ENCODE measurements at regions of chr11 and their contacts with region 1.

Region 1: DNA sequence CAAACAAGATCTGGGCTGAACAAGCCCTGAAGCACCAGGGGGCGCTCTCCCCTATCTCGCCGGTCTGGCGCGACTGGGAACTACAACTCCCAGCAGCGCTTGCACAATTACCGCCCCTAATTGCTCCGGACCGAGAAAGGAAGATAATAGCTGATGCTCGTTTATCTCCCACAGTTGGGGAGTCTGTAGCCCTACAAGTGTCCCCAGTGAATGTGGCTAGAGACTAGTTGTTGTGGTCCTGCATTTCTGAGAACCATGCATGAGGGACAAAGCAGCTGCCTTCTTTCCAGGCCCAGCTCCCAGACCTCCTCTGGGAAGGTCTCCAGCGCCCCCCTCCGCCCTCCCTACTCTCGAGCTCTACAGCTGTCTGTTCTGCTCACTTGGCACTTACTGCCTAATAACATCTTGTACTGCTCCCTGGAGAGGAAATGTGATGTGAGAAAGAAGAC is 34.4 kb downstream of the NRXN2 start:
- DNase-seq: peak; percentile 94
- H3K4me3 Mint-ChIP-seq: peak overlapping the region; percentile 35
- H3K27ac Mint-ChIP-seq: no peak overlapping the region
- H3K4me1 Mint-ChIP-seq: peaks cover 18% of the 10 kb centered on the region
- H3K27me3 Mint-ChIP-seq: peaks cover 59% of the 10 kb centered on the region

Region 2: DNA sequence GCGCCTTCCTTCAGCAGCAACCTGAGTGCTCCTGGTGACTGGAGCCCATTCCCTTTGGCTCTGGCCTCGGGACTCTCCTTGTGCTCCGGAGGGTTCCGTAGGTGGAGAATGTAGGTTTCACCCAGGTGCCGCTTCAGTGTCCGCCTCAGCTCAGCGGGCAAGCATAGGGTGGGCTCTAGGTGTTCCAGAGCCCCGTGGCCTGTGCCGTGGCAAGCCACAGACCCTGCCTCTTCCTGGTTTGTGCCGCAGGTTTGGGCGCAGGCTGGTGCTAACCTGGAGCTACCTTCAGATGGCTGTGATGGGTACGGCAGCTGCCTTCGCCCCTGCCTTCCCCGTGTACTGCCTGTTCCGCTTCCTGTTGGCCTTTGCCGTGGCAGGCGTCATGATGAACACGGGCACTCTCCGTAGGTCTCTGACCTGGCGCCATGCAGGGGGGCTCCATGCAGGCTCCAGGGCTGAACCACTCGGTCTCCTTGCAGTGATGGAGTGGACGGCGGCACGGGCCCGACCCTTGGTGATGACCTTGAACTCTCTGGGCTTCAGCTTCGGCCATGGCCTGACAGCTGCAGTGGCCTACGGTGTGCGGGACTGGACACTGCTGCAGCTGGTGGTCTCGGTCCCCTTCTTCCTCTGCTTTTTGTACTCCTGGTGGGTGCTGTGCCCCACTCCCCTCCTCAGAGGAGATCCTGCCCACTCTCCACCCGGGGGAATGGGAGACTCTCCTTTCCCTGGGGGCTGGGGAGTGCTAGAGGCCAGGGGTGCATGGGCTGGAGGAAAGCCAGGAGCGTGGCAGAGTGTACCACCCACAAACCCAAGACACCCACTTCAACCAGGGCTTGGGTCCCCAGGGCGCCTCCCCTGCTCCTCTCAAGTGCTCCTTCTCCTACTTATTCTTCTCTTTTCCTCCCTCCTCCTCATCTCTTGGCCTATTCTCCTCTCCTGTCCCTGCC is 95.1 kb before region 1 on chr11:
- CTCF ChIA-PET with region 1: no interaction called
- DNase-seq: no peak
- H3K4me3 Mint-ChIP-seq: no peak overlapping the region
- H3K27ac Mint-ChIP-seq: no peak overlapping the region
- H3K4me1 Mint-ChIP-seq: no peaks in the 10 kb centered on the region
- H3K27me3 Mint-ChIP-seq: peaks cover 5% of the 10 kb centered on the region

Region 3: DNA sequence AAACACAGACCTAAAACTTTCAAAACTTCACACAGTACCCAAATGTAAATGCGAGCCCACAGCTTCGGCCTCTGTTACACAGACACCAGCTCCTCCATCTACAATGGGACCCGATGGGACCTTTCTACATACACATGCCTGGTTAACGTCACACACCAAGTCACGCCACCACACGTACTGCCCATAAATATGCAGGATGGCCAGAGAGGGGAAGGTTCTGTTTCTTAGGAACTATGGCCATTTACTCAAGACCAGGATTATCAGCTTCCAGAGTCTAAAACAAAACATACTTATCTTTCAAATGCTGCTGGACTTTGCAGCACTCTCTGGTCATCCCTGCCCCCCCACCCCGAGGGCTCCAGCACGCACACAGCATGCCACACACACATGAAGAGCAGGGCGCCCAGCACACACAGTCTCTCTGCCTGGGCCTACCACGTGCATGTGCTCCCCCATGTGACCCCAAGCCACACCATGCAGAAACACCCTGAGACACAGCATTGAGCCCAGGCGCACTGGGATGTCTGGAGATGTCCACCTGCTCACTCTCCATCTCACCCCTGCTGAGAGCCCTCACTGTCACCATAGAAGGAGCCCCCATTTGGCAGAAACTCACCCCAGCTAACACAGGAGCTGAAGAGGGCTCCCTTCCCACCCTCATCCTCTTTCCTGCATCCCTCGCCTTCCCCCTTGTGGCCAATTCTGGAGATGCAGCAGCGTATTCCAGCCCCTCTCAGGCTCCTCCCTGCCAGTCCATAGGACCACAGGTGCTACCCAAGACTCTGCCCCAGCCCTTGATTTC is 35.8 kb before region 1 on chr11:
- CTCF ChIA-PET with region 1: interaction called, 13 read pairs
- DNase-seq: peak; percentile 84
- H3K4me3 Mint-ChIP-seq: no peak overlapping the region
- H3K27ac Mint-ChIP-seq: no peak overlapping the region
- H3K4me1 Mint-ChIP-seq: peaks cover 4% of the 10 kb centered on the region
- H3K27me3 Mint-ChIP-seq: peaks cover 25% of the 10 kb centered on the region

Region 4: DNA sequence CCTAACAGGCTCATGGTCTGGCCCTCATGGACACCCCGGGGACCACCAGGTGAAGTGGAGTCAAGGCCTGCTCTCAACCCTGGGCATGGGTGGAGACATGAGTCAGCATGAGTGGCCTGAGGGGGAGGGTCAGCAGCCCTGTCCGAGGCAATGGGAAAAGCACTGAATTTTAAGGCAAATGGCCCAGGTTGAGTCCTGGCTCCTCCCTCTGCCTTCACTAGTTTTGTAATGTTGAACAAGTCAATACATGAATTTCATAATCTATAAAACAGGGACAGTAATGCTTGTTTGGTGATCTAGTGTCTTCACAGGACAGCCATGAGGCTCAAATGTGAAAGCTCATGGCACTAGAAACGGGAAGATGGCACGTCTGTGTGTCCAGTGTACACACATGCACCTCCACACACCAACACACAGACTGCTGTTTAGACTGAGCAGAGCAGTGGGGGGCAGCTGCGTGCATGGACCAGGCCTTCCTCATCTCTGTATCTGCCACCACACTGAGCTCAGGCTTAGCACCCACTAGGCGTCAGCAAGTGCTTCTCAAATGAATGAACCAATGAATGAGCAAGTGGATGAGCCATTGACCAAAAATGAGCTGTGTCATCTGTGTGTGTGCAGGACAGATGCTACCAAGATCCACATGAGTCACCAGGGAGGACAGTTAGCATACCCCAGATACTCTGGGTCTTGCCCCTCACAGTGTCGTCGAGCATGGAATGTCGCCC is 29.0 kb before region 1 on chr11:
- CTCF ChIA-PET with region 1: interaction called, 15 read pairs
- DNase-seq: no peak
- H3K4me3 Mint-ChIP-seq: no peak overlapping the region
- H3K27ac Mint-ChIP-seq: no peak overlapping the region
- H3K4me1 Mint-ChIP-seq: peaks cover 4% of the 10 kb centered on the region
- H3K27me3 Mint-ChIP-seq: peaks cover 25% of the 10 kb centered on the region

Region 5: GRCh38 chr11:64705501-64705900 is 16.9 kb after region 1 on chr11:
- CTCF ChIA-PET with region 1: interaction called, 21 read pairs
- DNase-seq: no peak
- H3K4me3 Mint-ChIP-seq: no peak overlapping the region
- H3K27ac Mint-ChIP-seq: no peak overlapping the region
- H3K4me1 Mint-ChIP-seq: no peaks in the 10 kb centered on the region
- H3K27me3 Mint-ChIP-seq: peaks cover 57% of the 10 kb centered on the region

Region 6: GRCh38 chr11:64716473-64717267 is 28.1 kb after region 1 on chr11:
- CTCF ChIA-PET with region 1: interaction called, 11 read pairs
- DNase-seq: no peak
- H3K4me3 Mint-ChIP-seq: no peak overlapping the region
- H3K27ac Mint-ChIP-seq: no peak overlapping the region
- H3K4me1 Mint-ChIP-seq: peaks cover 11% of the 10 kb centered on the region
- H3K27me3 Mint-ChIP-seq: peaks cover 93% of the 10 kb centered on the region

Region 7: GRCh38 chr11:64742889-64743590 is 54.5 kb after region 1 on chr11:
- CTCF ChIA-PET with region 1: interaction called, 27 read pairs
- DNase-seq: peak; percentile 81
- H3K4me3 Mint-ChIP-seq: peak overlapping the region; percentile 96
- H3K27ac Mint-ChIP-seq: no peak overlapping the region
- H3K4me1 Mint-ChIP-seq: peaks cover 53% of the 10 kb centered on the region
- H3K27me3 Mint-ChIP-seq: peaks cover 4% of the 10 kb centered on the region

Region 8: GRCh38 chr11:64826062-64826461 is 137.5 kb after region 1 on chr11:
- CTCF ChIA-PET with region 1: no interaction called
- DNase-seq: no peak
- H3K4me3 Mint-ChIP-seq: no peak overlapping the region
- H3K27ac Mint-ChIP-seq: no peak overlapping the region
- H3K4me1 Mint-ChIP-seq: no peaks in the 10 kb centered on the region
- H3K27me3 Mint-ChIP-seq: peaks cover 17% of the 10 kb centered on the region

Measured in activated naive CD4-positive, alpha-beta T cell treated with anti-CD3 and anti-CD28 coated beads, Interleukin-2, amount 10 ng/mL, durations not matched to agents 7 days and 5 days (primary cell).